ENCODE measurements at regions of chr15 and their contacts with region 1.

Region 1: DNA sequence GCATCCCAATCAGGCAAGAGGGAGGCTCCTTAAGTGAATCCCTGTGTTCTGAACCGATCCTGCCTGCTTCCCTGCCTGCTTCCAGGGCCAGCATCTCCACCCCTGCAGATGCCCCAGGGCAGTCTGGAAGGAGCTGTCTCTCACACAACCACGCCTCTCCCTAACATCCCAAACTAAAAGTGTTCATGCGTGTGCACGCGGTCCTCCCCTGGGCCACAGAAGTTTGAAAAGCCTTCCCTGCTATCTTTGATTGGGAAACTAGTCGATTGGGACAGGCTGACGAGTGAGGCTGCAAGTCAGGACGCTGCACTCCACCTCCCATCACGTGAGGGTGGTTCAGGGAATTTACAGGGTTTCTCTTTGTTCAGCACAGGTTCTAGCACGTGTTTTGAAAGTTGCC is 340.9 kb upstream of the ICE2 start:
- DNase-seq: no peak
- ATAC-seq: peak in 2 of 8 donors; percentile 27 to 45
- H3K4me3 ChIP-seq: no peak overlapping the region
- H3K27ac ChIP-seq: no peak overlapping the region
- H3K4me1 ChIP-seq: peaks cover 0 to 5% (median 0%) of the 10 kb centered on the region in 9 donors
- H3K27me3 ChIP-seq: no peaks in the 10 kb centered on the region
- CTCF ChIP-seq: no peak

Region 2: DNA sequence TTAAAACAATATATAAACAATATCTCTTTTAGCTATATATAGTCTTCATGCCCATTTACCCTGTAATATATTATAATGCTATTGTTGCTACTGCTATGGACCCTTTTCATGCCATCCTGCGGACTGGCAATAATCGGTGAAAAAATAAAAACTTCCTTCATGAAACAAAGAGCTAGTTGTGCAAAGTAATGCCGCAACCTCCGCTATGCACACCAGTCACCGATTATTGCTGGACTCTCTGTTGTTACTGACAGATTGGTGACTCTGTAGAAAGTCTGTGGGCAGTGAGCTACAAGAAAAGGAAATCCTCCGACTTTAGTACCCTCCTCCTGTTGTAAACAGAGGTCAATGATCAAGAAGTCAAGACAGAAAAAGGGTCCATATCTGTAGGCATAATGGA is 323.0 kb before region 1 on chr15:
- intact Hi-C with region 1: no loop called
- DNase-seq: no peak
- ATAC-seq: no peak
- H3K4me3 ChIP-seq: no peak overlapping the region
- H3K27ac ChIP-seq: no peak overlapping the region
- H3K4me1 ChIP-seq: no peaks in the 10 kb centered on the region
- H3K27me3 ChIP-seq: no peaks in the 10 kb centered on the region
- CTCF ChIP-seq: no peak

Region 3: DNA sequence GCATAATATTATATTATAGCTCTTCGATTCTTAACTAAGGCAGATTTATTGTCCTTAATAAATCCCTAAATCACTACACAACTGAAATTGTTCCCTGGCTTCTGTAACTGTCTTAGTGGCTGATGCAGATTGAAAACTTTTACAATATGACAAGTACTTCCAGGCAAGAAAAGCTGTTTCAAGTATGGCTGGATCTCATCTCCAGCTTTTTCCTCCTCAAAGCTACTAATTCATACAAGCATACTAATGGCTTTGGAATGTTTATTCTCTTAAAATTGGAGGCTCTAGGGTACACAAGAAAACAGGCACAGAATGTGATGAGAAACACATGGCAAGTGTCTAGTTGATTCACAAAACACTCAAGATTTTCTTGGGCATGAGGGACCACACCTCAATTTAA is 10.6 kb after region 1 on chr15:
- intact Hi-C with region 1: loop called in 1 of 10 experiments (anchors 1 kb)
- DNase-seq: no peak
- ATAC-seq: peak in 3 of 8 donors; percentile 27 to 50 (median 44)
- H3K4me3 ChIP-seq: no peak overlapping the region
- H3K27ac ChIP-seq: peak overlapping the region in 1 of 10 donors; percentile 32
- H3K4me1 ChIP-seq: peaks cover 0 to 12% (median 0%) of the 10 kb centered on the region in 9 donors
- H3K27me3 ChIP-seq: no peaks in the 10 kb centered on the region
- CTCF ChIP-seq: no peak